Activated T-helper 1 cell treated with anti-CD3 and anti-CD28 coated beads, Interleukin-12 subunit alpha, Interleukin-12 subunit beta, Interleukin-2, Interleukin-4 antibody, amounts not matched to agents 30 ng/mL and 10 ng/mL and 1 ng/mL, durations not matched to agents 14 hours and 24 hours and 36 hours (primary cell): ENCODE measurements at regions of chr15 and their contacts with region 1.

Region 1: GRCh38 chr15:89334510-89335288 is at the start of gene POLG:
- DNase-seq: peak; percentile 99
- H3K4me3 Mint-ChIP-seq: peak within 1 kb of the TSS; percentile 85
- H3K27ac Mint-ChIP-seq: peak within 1 kb of the TSS; percentile 91
- H3K4me1 Mint-ChIP-seq: peaks cover 63% of the 10 kb centered on the region
- H3K27me3 Mint-ChIP-seq: peaks cover 5% of the 10 kb centered on the region
- total RNA-seq, gene POLG: 116 and 134 TPM in 2 replicates

Region 2: GRCh38 chr15:88897456-88898194 is 437.1 kb before region 1 on chr15:
- intact Hi-C with region 1: loop called (anchors 10 kb)
- DNase-seq: peak; percentile 78
- H3K4me3 Mint-ChIP-seq: no peak overlapping the region
- H3K27ac Mint-ChIP-seq: no peak overlapping the region
- H3K4me1 Mint-ChIP-seq: peaks cover 35% of the 10 kb centered on the region
- H3K27me3 Mint-ChIP-seq: no peaks in the 10 kb centered on the region

Region 3: DNA sequence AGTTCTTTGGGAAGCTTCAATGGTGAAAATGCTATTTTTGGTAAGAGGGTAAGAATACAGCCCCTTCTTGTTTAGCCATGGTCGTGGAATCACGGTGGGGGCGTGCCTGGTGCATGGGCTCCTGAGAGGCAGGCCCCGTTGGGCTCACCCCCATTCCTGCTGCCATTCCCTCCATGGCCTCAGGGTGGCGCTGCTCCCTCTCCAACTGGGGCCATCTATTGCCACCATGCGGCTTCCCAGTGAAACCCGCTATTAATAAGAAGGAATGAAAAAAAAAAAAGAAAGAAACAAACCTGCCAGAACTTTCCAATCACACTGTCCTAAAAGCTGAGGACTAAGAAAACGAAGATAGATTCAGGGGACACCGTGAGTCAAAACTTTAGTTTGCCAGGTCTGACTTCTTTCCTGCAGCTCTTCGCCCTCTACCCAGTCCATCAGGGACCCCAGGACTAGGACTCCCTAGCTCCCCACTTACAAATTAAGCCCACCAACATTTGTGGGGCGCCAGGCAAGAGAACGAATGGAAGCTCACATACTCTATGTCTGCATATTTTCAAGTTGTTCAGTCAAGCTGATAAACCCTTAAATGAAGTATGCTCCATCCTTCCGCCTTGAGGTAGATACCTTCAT is 277.1 kb before region 1 on chr15:
- intact Hi-C with region 1: loop called (anchors 10 kb)
- DNase-seq: peak; percentile 68
- H3K4me3 Mint-ChIP-seq: no peak overlapping the region
- H3K27ac Mint-ChIP-seq: no peak overlapping the region
- H3K4me1 Mint-ChIP-seq: peaks cover 11% of the 10 kb centered on the region
- H3K27me3 Mint-ChIP-seq: peaks cover 12% of the 10 kb centered on the region

Region 4: DNA sequence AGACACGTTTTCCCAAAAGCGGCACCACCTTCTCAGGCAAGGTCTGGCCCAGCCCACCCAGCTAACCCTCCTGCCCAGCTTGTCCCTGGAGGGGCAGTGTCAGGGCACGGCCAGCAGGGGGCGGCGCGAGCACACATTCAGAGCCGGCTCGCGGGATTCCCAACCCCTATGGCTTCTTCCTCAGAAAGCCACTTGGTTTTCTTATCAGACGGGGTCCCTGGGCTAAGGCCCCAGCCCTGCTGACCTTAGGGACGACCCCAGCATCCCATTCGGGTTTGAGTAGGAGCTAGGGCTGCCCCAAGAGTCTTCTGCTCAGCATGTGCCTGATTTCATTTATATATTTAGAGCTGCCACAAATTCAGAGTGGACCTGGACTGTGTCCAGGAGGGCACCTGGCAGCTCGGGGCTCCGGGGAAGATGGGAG is 127.8 kb before region 1 on chr15:
- intact Hi-C with region 1: loop called (anchors 1 kb)
- DNase-seq: peak; percentile 61
- H3K4me3 Mint-ChIP-seq: no peak overlapping the region
- H3K27ac Mint-ChIP-seq: no peak overlapping the region
- H3K4me1 Mint-ChIP-seq: peaks cover 39% of the 10 kb centered on the region
- H3K27me3 Mint-ChIP-seq: peaks cover 4% of the 10 kb centered on the region

Region 5: DNA sequence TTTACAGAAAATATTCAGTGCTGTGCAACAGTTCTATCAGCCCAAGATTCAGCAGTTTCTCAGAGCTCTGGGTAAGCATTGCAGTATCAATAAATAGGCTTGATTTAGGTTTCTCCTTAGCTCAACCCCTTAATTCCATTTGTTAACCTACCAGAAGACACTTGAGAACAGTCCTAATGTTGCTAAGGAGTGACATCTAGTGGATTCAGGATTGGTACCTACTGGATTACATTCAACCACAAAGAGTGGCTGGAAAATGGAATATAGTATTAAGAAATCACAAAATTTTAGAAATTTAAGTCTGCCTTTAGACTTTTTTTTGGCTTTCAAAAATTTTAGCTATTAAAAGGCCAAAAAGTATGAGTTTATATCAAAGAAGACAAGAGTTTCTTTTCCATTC is 34.8 kb before region 1 on chr15:
- intact Hi-C with region 1: loop called (anchors 5 kb)
- DNase-seq: no peak
- H3K4me3 Mint-ChIP-seq: no peak overlapping the region
- H3K27ac Mint-ChIP-seq: no peak overlapping the region
- H3K4me1 Mint-ChIP-seq: peaks cover 58% of the 10 kb centered on the region
- H3K27me3 Mint-ChIP-seq: no peaks in the 10 kb centered on the region

Region 6: DNA sequence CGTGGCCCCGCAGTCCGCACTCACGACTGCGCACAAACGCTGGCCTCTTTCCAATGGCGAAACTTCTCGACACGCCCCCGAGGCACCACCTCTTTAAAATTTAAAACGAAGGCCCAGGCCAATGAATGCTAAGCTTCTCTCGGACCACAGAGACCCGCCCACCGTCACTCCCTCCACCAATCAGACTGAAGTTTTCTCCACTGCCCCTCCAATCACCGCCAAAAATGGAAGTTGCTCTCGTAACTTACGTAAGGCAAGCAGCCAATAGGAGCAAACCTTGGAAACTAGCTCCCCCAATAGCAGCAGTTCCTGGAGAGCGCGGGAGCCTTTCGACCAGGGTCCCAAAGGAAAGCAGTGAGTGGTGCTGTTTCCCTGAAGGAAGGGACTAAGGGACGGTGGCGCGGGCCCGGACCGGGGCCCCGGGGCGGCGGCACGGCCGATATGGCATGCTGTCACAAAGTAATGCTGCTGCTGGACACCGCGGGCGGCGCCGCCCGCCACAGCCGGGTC is 240.5 kb after region 1 on chr15 and contains the start of gene TICRR:
- intact Hi-C with region 1: loop called (anchors 1 kb)
- DNase-seq: peak; percentile 97
- H3K4me3 Mint-ChIP-seq: peak within 1 kb of the TSS; percentile 94
- H3K27ac Mint-ChIP-seq: peak within 1 kb of the TSS; percentile 91
- H3K4me1 Mint-ChIP-seq: peaks cover 30% of the 10 kb centered on the region
- H3K27me3 Mint-ChIP-seq: peaks cover 16% of the 10 kb centered on the region
- total RNA-seq, gene TICRR: 17.6 and 19.2 TPM in 2 replicates

Region 7: GRCh38 chr15:89874926-89875564 is 540.3 kb after region 1 on chr15:
- intact Hi-C with region 1: no loop called
- DNase-seq: peak; percentile 66
- H3K4me3 Mint-ChIP-seq: no peak overlapping the region
- H3K27ac Mint-ChIP-seq: no peak overlapping the region
- H3K4me1 Mint-ChIP-seq: peaks cover 5% of the 10 kb centered on the region
- H3K27me3 Mint-ChIP-seq: no peaks in the 10 kb centered on the region

Region 8: DNA sequence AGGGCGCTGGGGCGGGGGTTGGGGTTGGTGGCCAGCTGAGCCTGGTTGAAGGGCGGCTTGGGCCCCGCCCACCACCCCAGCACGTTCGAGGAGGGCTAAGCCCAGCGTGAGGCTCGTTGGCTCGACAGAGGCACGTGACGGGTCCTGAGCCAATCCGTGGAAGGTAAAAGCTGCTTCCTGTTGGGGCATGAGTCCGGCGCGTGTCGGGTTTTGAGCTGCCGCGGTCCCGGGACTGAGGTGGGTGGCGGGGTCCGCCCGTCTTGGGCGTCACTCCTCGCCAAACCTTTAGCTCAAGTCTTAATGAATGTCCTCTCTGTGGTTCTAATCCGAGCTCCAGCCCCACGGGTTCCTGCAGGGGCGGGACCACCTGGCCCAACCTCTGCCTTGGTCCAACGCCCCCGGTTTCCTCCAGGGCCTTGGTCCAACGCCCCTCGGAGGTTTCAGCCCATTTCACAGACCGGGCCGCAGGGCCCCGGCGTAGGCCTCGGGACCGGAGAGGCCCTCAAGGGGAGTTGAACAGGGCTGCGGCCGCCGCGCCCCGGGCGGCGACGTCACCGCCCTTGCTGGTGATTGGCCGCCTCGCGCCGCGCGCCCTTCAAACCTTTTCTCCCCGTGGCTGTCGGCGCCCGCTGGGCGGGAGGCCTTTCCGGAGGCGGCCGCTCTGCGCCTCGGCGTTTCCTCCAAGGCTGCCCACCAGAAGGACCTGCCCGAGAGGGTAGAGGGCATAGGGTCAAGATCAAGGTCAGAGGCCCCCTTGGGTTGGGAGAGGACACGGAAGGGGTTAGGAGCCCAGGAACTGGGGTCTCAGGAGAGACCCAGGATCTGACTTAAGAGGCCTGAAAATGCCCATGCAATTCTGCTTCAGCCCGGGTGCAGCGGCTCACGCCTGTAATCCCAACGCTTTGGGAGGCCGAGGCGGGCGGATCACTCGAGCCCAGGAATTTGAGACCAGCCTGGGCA is 1620.3 kb after region 1 on chr15 and contains the start of gene RCCD1:
- intact Hi-C with region 1: loop called (anchors 10 kb)
- DNase-seq: peak; percentile 90
- H3K4me3 Mint-ChIP-seq: peak within 1 kb of the TSS; percentile 90
- H3K27ac Mint-ChIP-seq: peak within 1 kb of the TSS; percentile 90
- H3K4me1 Mint-ChIP-seq: peaks cover 24% of the 10 kb centered on the region
- H3K27me3 Mint-ChIP-seq: no peaks in the 10 kb centered on the region
- total RNA-seq, gene RCCD1: 26.4 and 27.2 TPM in 2 replicates